ENCODE measurements at regions of chr19 and their contacts with region 1.

Region 1: GRCh38 chr19:36850559-36851442 is at the start of gene ZNF345:
- DNase-seq: peak; percentile 71
- ATAC-seq: peak; percentile 83
- H3K4me3 Mint-ChIP-seq: no peak within 1 kb of the TSS
- H3K27ac Mint-ChIP-seq: no peak within 1 kb of the TSS
- H3K4me1 Mint-ChIP-seq: peaks cover 9% of the 10 kb centered on the region
- H3K27me3 Mint-ChIP-seq: no peaks in the 10 kb centered on the region
- CTCF ChIP-seq: no peak
- total RNA-seq, gene ZNF345: 7.8 and 9.5 TPM in 2 replicates

Region 2: GRCh38 chr19:36214386-36215275 is 636.2 kb before region 1 on chr19 and contains the starts of genes ZNF146 and ZNF565:
- CTCF ChIA-PET with region 1: no interaction called
- POLR2A ChIA-PET with region 1: interaction called, 7 read pairs
- intact Hi-C with region 1: loop called (anchors 2 kb)
- DNase-seq: peak; percentile 90
- ATAC-seq: peak; percentile 90
- H3K4me3 Mint-ChIP-seq: no peak within 1 kb of the TSS
- H3K27ac Mint-ChIP-seq: no peak within 1 kb of the TSS
- H3K4me1 Mint-ChIP-seq: peaks cover 29% of the 10 kb centered on the region
- H3K27me3 Mint-ChIP-seq: no peaks in the 10 kb centered on the region
- CTCF ChIP-seq: no peak
- total RNA-seq, gene ZNF146: 57.8 and 63.2 TPM in 2 replicates
- total RNA-seq, gene ZNF565: 2.3 and 3.2 TPM in 2 replicates

Region 3: DNA sequence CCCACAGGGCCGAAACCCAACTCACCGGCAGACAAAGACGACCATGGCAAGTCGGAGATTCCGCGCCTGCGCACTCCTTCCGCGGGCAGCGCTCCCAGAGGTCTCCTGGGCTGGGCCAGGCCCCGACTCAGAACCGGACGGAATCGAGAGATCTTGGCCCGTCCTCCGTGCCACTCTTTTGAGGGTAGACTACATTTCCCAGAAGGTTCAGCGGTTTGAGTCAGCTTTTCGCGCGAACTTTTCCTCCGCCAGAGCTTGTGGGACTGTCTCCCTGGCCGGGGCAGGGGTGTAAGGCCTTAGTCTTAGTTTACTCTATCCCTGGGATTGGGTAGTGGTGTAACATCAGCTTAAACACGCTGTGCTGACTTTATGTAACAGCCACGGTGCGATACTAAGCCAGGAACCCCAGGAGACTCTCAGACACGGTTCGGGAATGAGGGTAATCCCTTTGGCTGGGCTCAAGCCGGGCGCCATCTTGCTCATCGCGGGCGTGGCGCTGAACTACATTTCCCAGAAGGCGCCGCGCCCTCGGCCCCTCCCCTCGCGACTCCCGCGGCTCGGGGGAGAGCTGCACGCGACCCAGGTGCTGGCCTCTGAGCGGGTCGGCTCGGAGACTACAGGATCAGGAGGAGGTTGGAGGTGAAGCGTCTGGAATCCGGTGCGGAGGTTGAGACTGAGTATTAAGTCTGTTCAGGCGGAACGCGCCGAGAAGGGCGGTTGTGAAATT is 322.4 kb before region 1 on chr19 and contains the start of gene ZNF260:
- CTCF ChIA-PET with region 1: no interaction called
- POLR2A ChIA-PET with region 1: interaction called, 19 read pairs
- intact Hi-C with region 1: loop called (anchors 1 kb)
- DNase-seq: peak; percentile 94
- ATAC-seq: peak; percentile 89
- H3K4me3 Mint-ChIP-seq: peak within 1 kb of the TSS; percentile 99
- H3K27ac Mint-ChIP-seq: peak within 1 kb of the TSS; percentile 99
- H3K4me1 Mint-ChIP-seq: peaks cover 27% of the 10 kb centered on the region
- H3K27me3 Mint-ChIP-seq: no peaks in the 10 kb centered on the region
- CTCF ChIP-seq: no peak
- total RNA-seq, gene ZNF260: 9.8 and 13.6 TPM in 2 replicates

Region 4: DNA sequence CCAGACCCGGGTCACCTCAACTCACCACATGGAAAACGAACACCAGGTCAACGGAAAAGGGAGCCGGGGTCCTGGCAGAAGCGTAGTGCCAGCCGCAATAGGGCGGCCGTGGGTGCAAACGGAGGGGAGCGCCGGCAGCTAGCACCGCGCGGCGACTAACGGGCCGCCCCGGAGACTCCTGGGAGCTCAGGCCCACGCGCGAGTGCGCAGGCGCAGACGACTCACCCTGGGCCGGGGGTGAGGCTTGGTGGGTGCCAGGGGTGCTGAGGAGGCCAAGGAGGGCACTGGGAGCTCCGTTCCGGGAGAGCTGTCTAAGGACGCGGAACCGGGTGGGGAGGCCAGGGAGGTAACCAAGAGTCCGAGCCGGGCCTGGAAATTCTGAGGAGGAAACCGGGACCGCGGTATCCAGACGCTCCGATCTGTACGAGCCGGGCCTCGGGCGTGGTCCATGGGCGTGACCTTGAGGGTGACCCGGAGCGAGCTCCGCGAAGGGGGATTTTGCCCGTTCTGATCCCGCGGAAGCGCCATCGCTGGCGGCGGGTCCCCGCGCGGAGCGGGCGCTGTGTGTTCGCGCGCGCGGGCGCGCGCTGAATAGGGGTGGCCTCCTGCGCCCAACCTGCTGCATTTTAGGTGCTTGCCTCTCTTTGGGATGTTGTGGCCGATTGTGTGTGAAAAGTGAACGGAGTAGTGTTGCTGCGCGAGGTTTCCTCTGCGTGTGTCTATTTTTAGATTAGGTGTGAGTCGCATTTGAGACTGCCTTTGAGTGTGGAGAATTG is 245.5 kb before region 1 on chr19 and contains the start of gene ZNF382:
- CTCF ChIA-PET with region 1: no interaction called
- POLR2A ChIA-PET with region 1: interaction called, 14 read pairs
- intact Hi-C with region 1: loop called (anchors 1 kb)
- DNase-seq: peak; percentile 85
- ATAC-seq: peak; percentile 80
- H3K4me3 Mint-ChIP-seq: peak within 1 kb of the TSS; percentile 97
- H3K27ac Mint-ChIP-seq: peak within 1 kb of the TSS; percentile 97
- H3K4me1 Mint-ChIP-seq: peaks cover 28% of the 10 kb centered on the region
- H3K27me3 Mint-ChIP-seq: no peaks in the 10 kb centered on the region
- CTCF ChIP-seq: no peak
- total RNA-seq, gene ZNF382: 11.5 and 14.4 TPM in 2 replicates

Region 5: DNA sequence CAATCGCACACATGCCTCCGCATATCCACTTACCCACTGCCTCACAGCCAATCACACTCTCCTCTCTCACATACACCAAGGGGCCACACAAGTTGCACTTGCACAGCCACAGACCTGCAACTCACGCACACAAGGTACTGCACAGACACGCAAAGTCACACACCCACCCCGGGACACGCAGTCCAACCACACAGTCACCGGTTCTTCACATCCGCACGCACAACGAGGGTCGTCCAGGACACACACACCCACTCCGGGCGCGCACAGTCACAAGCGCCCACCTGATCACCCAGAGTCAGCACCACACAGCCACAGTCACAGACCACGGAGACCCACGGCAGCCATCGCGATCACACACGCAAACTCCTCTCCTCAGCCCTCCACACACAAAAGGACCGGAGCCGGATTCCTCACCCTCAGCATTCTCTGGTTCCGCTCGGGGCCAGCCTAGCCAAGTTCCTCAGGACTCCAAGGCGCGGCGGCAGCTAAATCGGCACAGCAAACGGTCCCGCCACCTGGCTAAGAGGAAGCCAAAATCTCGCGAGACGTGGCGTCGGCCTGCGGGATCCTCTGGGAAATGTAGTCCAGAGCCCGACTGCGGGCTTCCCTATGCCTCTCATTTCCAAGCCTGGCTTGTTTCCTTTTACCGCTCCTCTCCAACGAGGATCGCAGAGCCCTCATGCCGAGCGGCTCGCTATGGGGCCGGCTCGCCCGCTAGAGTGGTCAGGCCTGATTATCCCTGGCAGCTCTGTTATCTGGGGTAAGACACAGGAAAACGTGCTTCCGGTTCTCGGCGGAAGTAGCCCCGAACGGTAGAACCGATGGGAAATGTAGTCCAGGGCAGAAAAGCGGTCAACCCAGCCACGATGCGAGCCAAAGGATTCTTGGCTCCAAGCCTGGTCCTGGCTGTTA is 78.2 kb before region 1 on chr19 and contains the start of gene ZNF850:
- CTCF ChIA-PET with region 1: interaction called, 4 read pairs
- POLR2A ChIA-PET with region 1: interaction called, 10 read pairs
- intact Hi-C with region 1: loop called (anchors 1 kb)
- DNase-seq: peak; percentile 89
- ATAC-seq: peak; percentile 92
- H3K4me3 Mint-ChIP-seq: peak within 1 kb of the TSS; percentile 92
- H3K27ac Mint-ChIP-seq: peak within 1 kb of the TSS; percentile 85
- H3K4me1 Mint-ChIP-seq: peaks cover 24% of the 10 kb centered on the region
- H3K27me3 Mint-ChIP-seq: no peaks in the 10 kb centered on the region
- CTCF ChIP-seq: no peak
- total RNA-seq, gene ZNF850: 5.8 and 7.9 TPM in 2 replicates

Region 6: DNA sequence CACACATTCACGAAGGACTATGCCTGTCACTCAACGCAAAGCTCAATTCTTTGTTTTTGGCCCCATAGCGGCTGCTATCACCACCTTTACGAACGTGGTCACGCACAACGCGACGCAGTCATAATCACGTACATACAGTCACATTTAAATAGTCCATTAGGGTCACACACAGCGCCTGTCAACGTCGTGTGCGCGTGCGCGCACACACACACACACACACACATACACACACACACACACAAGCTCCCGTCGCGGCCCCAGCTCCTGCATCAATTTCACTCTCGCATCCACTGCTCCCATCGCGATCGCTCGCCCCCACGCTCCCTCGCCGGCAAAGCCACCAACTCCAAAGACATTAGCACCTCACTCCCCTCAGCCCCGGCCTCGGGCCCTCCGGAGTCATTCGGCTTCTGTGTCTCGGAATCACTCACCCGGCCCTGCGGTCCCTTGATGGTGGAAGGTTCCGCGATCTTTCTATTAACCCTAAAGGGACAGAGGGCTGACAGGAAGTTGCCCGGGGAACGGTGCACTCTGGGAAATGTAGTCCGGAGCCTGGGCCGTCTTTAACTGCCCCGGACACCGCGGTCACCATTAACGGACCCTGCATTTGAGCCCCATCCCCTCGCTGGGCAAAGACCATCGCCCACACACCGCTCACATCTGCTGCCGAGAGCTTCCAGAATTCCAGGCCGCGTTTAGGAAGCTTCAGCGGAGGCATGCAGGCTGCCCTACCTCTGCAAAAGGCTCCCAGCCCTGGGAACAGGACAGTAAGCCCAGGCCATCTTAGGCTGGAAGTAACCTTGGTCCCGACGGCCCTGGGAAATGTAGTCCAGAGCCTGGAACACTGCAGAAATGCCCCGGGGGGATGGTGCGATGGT is 12.7 kb before region 1 on chr19 and contains the start of gene ZNF790:
- CTCF ChIA-PET with region 1: interaction called, 4 read pairs
- POLR2A ChIA-PET with region 1: interaction called, 75 read pairs
- intact Hi-C with region 1: loop called (anchors 1 kb)
- DNase-seq: peak; percentile 76
- ATAC-seq: peak; percentile 94
- H3K4me3 Mint-ChIP-seq: no peak within 1 kb of the TSS
- H3K27ac Mint-ChIP-seq: no peak within 1 kb of the TSS
- H3K4me1 Mint-ChIP-seq: peaks cover 2% of the 10 kb centered on the region
- H3K27me3 Mint-ChIP-seq: no peaks in the 10 kb centered on the region
- CTCF ChIP-seq: no peak
- total RNA-seq, gene ZNF790: 10.3 and 11.5 TPM in 2 replicates

Region 7: GRCh38 chr19:36986601-36987000 is 135.8 kb after region 1 on chr19:
- CTCF ChIA-PET with region 1: no interaction called
- POLR2A ChIA-PET with region 1: no interaction called
- intact Hi-C with region 1: no loop called
- DNase-seq: no peak
- ATAC-seq: no peak
- H3K4me3 Mint-ChIP-seq: no peak overlapping the region
- H3K27ac Mint-ChIP-seq: no peak overlapping the region
- H3K4me1 Mint-ChIP-seq: no peaks in the 10 kb centered on the region
- H3K27me3 Mint-ChIP-seq: no peaks in the 10 kb centered on the region
- CTCF ChIP-seq: no peak

Region 8: DNA sequence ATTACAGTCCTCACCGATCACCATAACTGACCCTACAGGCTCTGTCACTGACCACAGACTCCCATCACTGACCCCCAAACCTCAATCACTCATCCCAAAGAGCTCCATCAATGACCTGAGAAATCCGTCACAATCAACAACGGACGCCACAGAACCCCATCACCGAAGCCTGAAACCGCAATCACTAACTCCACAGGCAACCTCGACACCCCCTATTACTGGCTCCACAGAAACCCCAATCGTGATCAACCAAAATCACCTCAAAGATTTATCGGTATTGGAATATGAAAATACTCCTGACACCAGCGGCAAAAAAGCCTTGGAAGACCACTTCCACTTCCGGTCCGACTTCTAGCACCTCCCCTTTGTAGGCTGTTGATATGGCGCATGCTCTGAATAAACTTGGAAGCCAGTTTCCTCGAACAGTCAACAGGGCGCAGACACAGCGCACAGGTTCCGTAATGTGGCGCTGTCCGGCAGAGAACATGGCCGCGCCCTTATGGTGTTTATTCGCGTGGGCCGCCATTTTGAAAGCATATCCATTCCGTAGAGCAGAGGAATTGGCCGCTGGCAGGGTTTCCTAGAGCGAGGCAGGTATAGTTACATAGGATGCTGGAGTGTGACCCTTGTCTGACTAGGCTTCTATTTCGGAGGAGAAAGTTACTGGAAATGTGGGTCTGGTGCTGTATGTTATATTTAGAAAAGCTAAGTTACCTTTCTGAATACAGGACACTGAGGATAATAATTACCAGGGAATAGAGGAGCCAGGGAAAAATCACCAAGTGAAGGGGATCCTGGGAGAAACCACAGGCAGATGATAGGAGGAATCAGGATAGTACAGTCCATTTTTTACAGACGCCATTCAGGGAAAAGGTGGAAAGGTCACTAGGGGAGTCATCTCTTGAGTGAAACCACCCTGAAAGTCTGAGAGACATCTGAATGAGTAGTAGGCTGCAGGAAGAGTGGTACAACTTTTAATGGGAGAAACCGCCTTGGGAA is 321.9 kb after region 1 on chr19 and contains the start of gene ZNF585A:
- CTCF ChIA-PET with region 1: no interaction called
- POLR2A ChIA-PET with region 1: interaction called, 3 read pairs
- intact Hi-C with region 1: loop called (anchors 1 kb)
- DNase-seq: peak; percentile 77
- ATAC-seq: peak; percentile 99
- H3K4me3 Mint-ChIP-seq: peak within 1 kb of the TSS; percentile 52
- H3K27ac Mint-ChIP-seq: no peak within 1 kb of the TSS
- H3K4me1 Mint-ChIP-seq: peaks cover 4% of the 10 kb centered on the region
- H3K27me3 Mint-ChIP-seq: no peaks in the 10 kb centered on the region
- CTCF ChIP-seq: no peak
- total RNA-seq, gene ZNF585A: 14.4 and 17.0 TPM in 2 replicates

Region 9: DNA sequence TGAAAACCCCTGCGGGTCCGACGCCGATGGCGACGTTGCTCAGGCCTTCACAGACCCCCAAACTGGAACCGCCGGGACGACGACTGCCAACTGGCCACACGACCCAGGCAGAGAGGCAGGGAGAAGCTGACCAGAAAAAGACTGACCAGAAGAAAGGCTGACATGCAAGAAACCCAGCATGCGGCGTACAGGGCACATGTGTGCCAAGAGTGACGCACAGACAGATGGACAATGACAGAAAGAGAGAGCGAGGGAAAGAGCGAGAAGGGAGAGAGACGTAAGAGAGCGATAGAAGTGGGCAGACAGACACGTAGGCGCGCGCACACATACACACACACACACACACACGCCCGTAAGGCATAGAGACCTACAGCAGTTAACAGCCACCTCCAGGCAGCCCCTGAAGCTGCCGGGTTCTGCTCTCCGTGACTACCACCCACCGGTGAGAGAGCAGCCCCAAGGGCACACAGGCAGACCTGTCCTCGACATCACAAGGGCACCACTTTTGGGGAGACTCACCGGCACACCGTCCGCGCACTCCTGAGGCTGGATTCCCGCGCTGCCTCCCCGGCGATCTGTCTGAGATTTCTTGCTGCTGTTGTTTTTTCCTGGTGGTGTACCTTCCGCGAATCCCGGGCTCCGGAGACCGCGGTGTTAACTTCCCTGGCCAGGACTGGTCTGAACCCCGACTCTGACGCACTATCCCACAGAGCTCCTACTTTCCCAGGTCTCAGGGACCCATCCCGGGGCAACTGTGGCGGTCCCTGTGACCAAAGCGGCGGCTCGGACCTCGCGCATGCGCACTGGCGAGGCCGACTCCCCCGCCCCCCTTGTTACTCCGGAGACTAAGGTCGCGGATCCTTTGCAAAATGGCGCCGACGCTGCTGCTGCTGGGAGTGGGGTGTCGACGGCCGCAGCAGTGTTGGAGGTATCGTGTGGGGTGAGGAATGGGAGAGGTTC is 453.1 kb after region 1 on chr19:
- CTCF ChIA-PET with region 1: no interaction called
- POLR2A ChIA-PET with region 1: no interaction called
- intact Hi-C with region 1: no loop called
- DNase-seq: no peak
- ATAC-seq: no peak
- H3K4me3 Mint-ChIP-seq: peak overlapping the region; percentile 50
- H3K27ac Mint-ChIP-seq: no peak overlapping the region
- H3K4me1 Mint-ChIP-seq: no peaks in the 10 kb centered on the region
- H3K27me3 Mint-ChIP-seq: peaks cover 2% of the 10 kb centered on the region
- CTCF ChIP-seq: no peak